Heart left ventricle (tissue), 16 donors: ENCODE measurements at regions of chr11 and their contacts with region 1.

Region 1: GRCh38 chr11:86021377-86021776 is 47.5 kb downstream of the PICALM start:
- DNase-seq: no peak
- ATAC-seq: no peak
- H3K4me3 ChIP-seq: no peak overlapping the region
- H3K27ac ChIP-seq: peak overlapping the region in 1 of 12 donors; percentile 24
- H3K4me1 ChIP-seq: peaks cover 0 to 18% (median 0%) of the 10 kb centered on the region in 12 donors
- H3K27me3 ChIP-seq: no peaks in the 10 kb centered on the region
- CTCF ChIP-seq: no peak
- POLR2A ChIP-seq: no peak

Region 2: GRCh38 chr11:85965202-85965601 is 56.2 kb before region 1 on chr11:
- intact Hi-C with region 1: no loop called
- DNase-seq: no peak
- ATAC-seq: no peak
- H3K4me3 ChIP-seq: no peak overlapping the region
- H3K27ac ChIP-seq: no peak overlapping the region
- H3K4me1 ChIP-seq: peaks cover 0 to 52% (median 30%) of the 10 kb centered on the region in 12 donors
- H3K27me3 ChIP-seq: no peaks in the 10 kb centered on the region
- CTCF ChIP-seq: no peak
- POLR2A ChIP-seq: no peak

Region 3: DNA sequence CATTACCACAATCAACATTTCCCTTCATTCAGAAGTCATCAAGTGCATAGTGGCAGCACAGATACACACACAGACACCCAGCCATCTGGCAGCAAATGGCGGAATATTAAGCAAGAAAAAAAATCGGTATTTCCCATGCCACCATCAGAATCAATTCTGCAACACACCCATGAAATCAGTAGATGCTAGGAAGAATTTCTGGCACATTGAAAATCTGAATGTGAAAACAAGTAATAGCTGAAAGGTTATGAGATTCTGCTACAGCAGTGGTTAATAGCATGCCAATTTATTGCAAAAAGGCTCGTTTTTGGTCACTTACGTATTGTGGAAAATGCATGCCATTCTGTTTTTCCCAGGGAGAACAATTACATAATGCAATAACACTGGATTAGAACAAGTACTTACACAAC is 43.6 kb before region 1 on chr11:
- intact Hi-C with region 1: loop called in 2 of 10 experiments (anchors 5 kb)
- DNase-seq: no peak
- ATAC-seq: peak in 2 of 4 donors; percentile 41 to 48
- H3K4me3 ChIP-seq: no peak overlapping the region
- H3K27ac ChIP-seq: peak overlapping the region in 5 of 12 donors; percentile 4 to 59 (median 8)
- H3K4me1 ChIP-seq: peaks cover 0 to 32% (median 19%) of the 10 kb centered on the region in 12 donors
- H3K27me3 ChIP-seq: no peaks in the 10 kb centered on the region
- CTCF ChIP-seq: no peak
- POLR2A ChIP-seq: no peak

Region 4: DNA sequence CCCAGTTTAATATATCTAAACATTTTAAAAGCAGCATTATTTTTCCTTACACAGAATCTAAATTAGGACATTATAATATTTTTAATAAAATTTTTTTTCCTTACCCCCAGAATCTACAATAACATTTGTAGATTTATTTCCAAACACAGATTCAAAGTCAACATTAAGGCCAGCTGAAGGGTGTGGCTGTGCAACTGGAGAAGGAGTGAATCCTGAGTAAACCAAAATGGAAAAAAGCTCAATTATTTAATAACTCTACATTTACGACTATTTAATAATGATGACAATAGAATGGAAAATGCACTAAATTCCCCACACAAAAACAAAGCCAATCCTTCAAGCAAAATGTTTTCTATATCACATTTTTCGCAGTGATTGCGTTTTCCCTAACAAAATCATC is 37.6 kb before region 1 on chr11:
- intact Hi-C with region 1: loop called in 2 of 10 experiments (anchors 5 kb)
- DNase-seq: no peak
- ATAC-seq: no peak
- H3K4me3 ChIP-seq: no peak overlapping the region
- H3K27ac ChIP-seq: peak overlapping the region in 3 of 12 donors; percentile 2 to 15 (median 5)
- H3K4me1 ChIP-seq: peaks cover 0 to 30% (median 6%) of the 10 kb centered on the region in 12 donors
- H3K27me3 ChIP-seq: no peaks in the 10 kb centered on the region
- CTCF ChIP-seq: no peak
- POLR2A ChIP-seq: no peak